Cardiac septum (tissue), 1 donor: ENCODE measurements at regions of chr21 and their contacts with region 1.

Region 1: GRCh38 chr21:35189077-35189863 is 140.2 kb upstream of the RUNX1 start:
- DNase-seq: no peak

Region 2: GRCh38 chr21:35159881-35160280 is 29.4 kb before region 1 on chr21:
- intact Hi-C with region 1: loop called (anchors 2 kb)
- DNase-seq: no peak